CD4-positive, alpha-beta T cell (primary cell): ENCODE measurements at regions of chr5 and their contacts with region 1.

Region 1: GRCh38 chr5:65925601-65926275 is 637 bp upstream of the ERBIN start:
- DNase-seq: peak; percentile 69 to 95 (median 78)
- ATAC-seq: peak; percentile 65
- H3K4me3 ChIP-seq: peak overlapping the region; percentile 87
- H3K4me3 Mint-ChIP-seq: peak overlapping the region; percentile 98
- H3K27ac ChIP-seq: peak overlapping the region; percentile 92 to 98
- H3K27ac Mint-ChIP-seq: peak overlapping the region; percentile 88
- H3K4me1 ChIP-seq: peaks cover 26% of the 10 kb centered on the region
- H3K4me1 Mint-ChIP-seq: peaks cover 48% of the 10 kb centered on the region
- H3K27me3 ChIP-seq: no peaks in the 10 kb centered on the region
- H3K27me3 Mint-ChIP-seq: no peaks in the 10 kb centered on the region
- CTCF ChIP-seq: no peak

Region 2: DNA sequence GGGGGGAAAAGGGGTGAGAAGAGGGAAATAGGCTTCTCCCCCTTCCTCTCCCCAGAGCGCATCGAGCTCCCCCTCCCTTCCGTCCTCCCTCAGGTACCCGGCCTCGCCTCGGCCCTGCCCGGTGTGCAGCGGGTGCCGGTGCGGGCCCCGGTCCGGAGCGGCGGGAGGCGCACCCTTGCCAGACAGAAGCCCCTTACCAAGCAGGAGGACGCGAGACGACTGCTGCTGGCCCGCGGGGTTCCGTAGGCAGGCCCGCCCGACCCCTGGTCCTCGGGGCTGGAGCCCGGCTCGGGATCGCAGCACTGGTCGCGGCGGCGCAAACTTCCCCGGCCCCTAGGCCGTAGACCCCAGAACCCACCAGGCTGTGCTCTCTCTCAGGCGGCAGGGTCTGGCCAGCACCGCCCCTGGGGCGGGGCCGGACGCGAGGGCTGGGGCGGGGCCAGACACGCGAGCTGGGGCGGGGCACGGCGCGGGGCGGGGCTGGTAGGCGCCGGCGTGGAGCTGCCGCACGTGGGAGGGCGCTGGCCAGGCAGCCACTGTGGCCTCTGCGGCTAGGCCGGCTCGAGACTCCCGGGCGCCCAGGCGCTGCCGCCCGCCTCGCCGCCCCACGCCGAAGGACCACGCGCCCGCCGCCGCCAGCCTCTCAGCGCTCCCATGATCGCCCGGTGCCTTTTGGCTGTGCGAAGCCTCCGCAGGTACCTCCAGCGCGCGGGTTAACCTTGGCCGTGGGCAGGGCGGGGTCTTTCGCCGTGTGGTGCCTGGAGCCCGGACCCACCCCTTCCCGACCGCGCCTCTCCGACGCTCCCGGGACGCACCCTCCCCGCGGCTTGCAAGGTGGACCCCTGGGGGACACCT is 203.8 kb before region 1 on chr5 and contains the starts of genes NLN and SGTB:
- CTCF ChIA-PET with region 1: interaction called, 4 read pairs
- POLR2A ChIA-PET with region 1: interaction called, 86 read pairs
- intact Hi-C with region 1: loop called (anchors 5 kb)
- DNase-seq: peak; percentile 70 to 92 (median 82)
- ATAC-seq: peak; percentile 86
- H3K4me3 ChIP-seq: peak within 1 kb of the TSS; percentile 88
- H3K4me3 Mint-ChIP-seq: peak within 1 kb of the TSS; percentile 95
- H3K27ac ChIP-seq: peak within 1 kb of the TSS; percentile 83 to 97
- H3K27ac Mint-ChIP-seq: peak within 1 kb of the TSS; percentile 86
- H3K4me1 ChIP-seq: peaks cover 32% of the 10 kb centered on the region
- H3K4me1 Mint-ChIP-seq: peaks cover 26% of the 10 kb centered on the region
- H3K27me3 ChIP-seq: no peaks in the 10 kb centered on the region
- H3K27me3 Mint-ChIP-seq: no peaks in the 10 kb centered on the region
- CTCF ChIP-seq: no peak
- total RNA-seq, gene NLN: 1.4 to 2.5 TPM
- total RNA-seq, gene SGTB: 84.2 to 93.7 TPM

Region 3: GRCh38 chr5:65809817-65810531 is 115.8 kb before region 1 on chr5:
- CTCF ChIA-PET with region 1: no interaction called
- POLR2A ChIA-PET with region 1: no interaction called
- intact Hi-C with region 1: loop called in 1 of 2 experiments (anchors 10 kb)
- DNase-seq: no peak
- ATAC-seq: no peak
- H3K4me3 ChIP-seq: no peak overlapping the region
- H3K4me3 Mint-ChIP-seq: no peak overlapping the region
- H3K27ac ChIP-seq: no peak overlapping the region
- H3K27ac Mint-ChIP-seq: no peak overlapping the region
- H3K4me1 ChIP-seq: no peaks in the 10 kb centered on the region
- H3K4me1 Mint-ChIP-seq: peaks cover 31% of the 10 kb centered on the region
- H3K27me3 ChIP-seq: no peaks in the 10 kb centered on the region
- H3K27me3 Mint-ChIP-seq: no peaks in the 10 kb centered on the region
- CTCF ChIP-seq: no peak

Region 4: DNA sequence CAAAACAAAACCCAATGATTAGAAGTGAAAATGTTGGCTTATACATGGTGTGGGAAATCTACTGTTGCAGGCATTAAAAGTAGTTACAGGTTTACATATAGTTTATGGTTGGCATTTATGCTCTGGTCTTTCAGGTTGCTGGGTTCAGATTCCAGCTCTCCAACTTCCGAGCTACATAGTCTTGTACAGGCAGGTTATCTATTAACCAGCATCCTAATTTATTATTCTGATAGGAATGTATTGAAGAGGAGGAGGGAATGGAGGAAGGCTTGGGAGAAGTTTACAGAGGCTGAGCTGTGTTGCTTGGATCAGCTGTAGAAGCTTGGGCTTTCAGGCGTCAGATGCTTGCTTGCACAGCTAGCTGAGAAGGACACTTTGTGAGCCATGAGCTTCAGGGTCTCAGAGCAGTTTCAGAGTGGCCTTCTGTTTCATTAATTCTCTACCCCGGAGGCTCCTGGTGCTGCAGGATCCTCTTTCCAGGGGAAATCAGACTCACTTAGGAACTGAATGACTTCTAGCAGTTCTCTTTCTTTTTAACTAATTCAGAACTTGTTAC is 11.0 kb before region 1 on chr5:
- CTCF ChIA-PET with region 1: no interaction called
- POLR2A ChIA-PET with region 1: interaction called, 14 read pairs
- intact Hi-C with region 1: no loop called
- DNase-seq: no peak
- ATAC-seq: no peak
- H3K4me3 ChIP-seq: no peak overlapping the region
- H3K4me3 Mint-ChIP-seq: no peak overlapping the region
- H3K27ac ChIP-seq: no peak overlapping the region
- H3K27ac Mint-ChIP-seq: no peak overlapping the region
- H3K4me1 ChIP-seq: no peaks in the 10 kb centered on the region
- H3K4me1 Mint-ChIP-seq: peaks cover 8% of the 10 kb centered on the region
- H3K27me3 ChIP-seq: no peaks in the 10 kb centered on the region
- H3K27me3 Mint-ChIP-seq: no peaks in the 10 kb centered on the region
- CTCF ChIP-seq: no peak

Region 5: GRCh38 chr5:65952259-65952658 is 26.5 kb after region 1 on chr5:
- CTCF ChIA-PET with region 1: interaction called, 3 read pairs
- POLR2A ChIA-PET with region 1: interaction called, 12 read pairs
- intact Hi-C with region 1: no loop called
- DNase-seq: no peak
- ATAC-seq: no peak
- H3K4me3 ChIP-seq: no peak overlapping the region
- H3K4me3 Mint-ChIP-seq: no peak overlapping the region
- H3K27ac ChIP-seq: no peak overlapping the region
- H3K27ac Mint-ChIP-seq: peak overlapping the region; percentile 83
- H3K4me1 ChIP-seq: peaks cover 10% of the 10 kb centered on the region
- H3K4me1 Mint-ChIP-seq: peaks cover 72% of the 10 kb centered on the region
- H3K27me3 ChIP-seq: no peaks in the 10 kb centered on the region
- H3K27me3 Mint-ChIP-seq: no peaks in the 10 kb centered on the region
- CTCF ChIP-seq: no peak

Region 6: DNA sequence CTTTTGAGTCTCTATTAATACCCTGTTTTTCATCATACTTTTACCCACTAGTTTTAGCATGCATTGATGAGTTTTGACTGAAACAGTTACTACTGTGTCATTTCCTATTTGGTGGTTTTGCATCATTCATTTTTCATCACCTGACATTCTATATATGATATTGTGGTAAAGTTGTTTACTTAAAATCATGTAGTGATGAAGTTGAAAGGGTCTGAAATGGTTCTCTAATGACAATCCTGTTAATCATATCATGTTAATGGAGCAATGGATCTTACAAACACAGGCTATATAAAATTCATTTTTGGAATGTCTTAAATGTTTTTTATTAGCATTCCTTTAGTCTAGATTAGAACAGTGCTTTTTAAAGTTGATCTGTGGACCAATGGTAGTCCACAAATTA is 84.7 kb after region 1 on chr5:
- CTCF ChIA-PET with region 1: no interaction called
- POLR2A ChIA-PET with region 1: interaction called, 4 read pairs
- intact Hi-C with region 1: loop called (anchors 2 to 5 kb)
- DNase-seq: peak in 3 of 14 experiments; percentile 18 to 49 (median 28)
- ATAC-seq: peak; percentile 93
- H3K4me3 ChIP-seq: no peak overlapping the region
- H3K4me3 Mint-ChIP-seq: peak overlapping the region; percentile 7
- H3K27ac ChIP-seq: no peak overlapping the region
- H3K27ac Mint-ChIP-seq: peak overlapping the region; percentile 90
- H3K4me1 ChIP-seq: peaks cover 2% of the 10 kb centered on the region
- H3K4me1 Mint-ChIP-seq: peaks cover 55% of the 10 kb centered on the region
- H3K27me3 ChIP-seq: no peaks in the 10 kb centered on the region
- H3K27me3 Mint-ChIP-seq: no peaks in the 10 kb centered on the region
- CTCF ChIP-seq: no peak

Region 7: DNA sequence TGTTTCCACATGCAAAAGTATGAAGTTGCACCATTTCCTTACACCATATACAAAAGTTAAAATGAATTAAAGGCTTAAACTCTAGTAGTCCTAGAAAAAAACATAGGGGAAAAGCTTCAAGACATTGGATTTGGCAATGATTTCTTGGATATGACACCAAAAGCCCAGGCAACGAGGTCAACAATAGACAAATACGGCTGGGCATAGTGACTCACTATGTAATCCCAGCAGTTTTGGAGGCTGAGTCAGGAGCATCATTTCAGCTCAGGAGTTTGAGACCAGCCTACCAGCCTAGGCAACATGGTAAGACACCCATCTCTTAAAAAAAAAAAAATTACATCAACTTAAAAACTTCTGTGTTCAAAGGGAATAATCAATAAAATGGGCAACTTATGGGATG is 187.4 kb after region 1 on chr5:
- CTCF ChIA-PET with region 1: no interaction called
- POLR2A ChIA-PET with region 1: no interaction called
- intact Hi-C with region 1: no loop called
- DNase-seq: no peak
- ATAC-seq: no peak
- H3K4me3 ChIP-seq: no peak overlapping the region
- H3K4me3 Mint-ChIP-seq: no peak overlapping the region
- H3K27ac ChIP-seq: no peak overlapping the region
- H3K27ac Mint-ChIP-seq: no peak overlapping the region
- H3K4me1 ChIP-seq: no peaks in the 10 kb centered on the region
- H3K4me1 Mint-ChIP-seq: no peaks in the 10 kb centered on the region
- H3K27me3 ChIP-seq: no peaks in the 10 kb centered on the region
- H3K27me3 Mint-ChIP-seq: no peaks in the 10 kb centered on the region
- CTCF ChIP-seq: no peak

Region 8: GRCh38 chr5:66171349-66172344 is 245.9 kb after region 1 on chr5:
- CTCF ChIA-PET with region 1: interaction called, 4 read pairs
- POLR2A ChIA-PET with region 1: interaction called, 13 read pairs
- intact Hi-C with region 1: loop called in 1 of 2 experiments (anchors 1 kb)
- DNase-seq: peak; percentile 20 to 89 (median 44)
- ATAC-seq: peak; percentile 68
- H3K4me3 ChIP-seq: no peak overlapping the region
- H3K4me3 Mint-ChIP-seq: peak overlapping the region; percentile 36
- H3K27ac ChIP-seq: peak overlapping the region in 1 of 2 donors; percentile 6
- H3K27ac Mint-ChIP-seq: peak overlapping the region; percentile 85
- H3K4me1 ChIP-seq: no peaks in the 10 kb centered on the region
- H3K4me1 Mint-ChIP-seq: peaks cover 41% of the 10 kb centered on the region
- H3K27me3 ChIP-seq: no peaks in the 10 kb centered on the region
- H3K27me3 Mint-ChIP-seq: no peaks in the 10 kb centered on the region
- CTCF ChIP-seq: peak; percentile 69